Activated CD4-positive, alpha-beta memory T cell treated with anti-CD3 and anti-CD28 coated beads for 36 hours (primary cell): ENCODE measurements at regions of chr2 and their contacts with region 1.

Region 1: DNA sequence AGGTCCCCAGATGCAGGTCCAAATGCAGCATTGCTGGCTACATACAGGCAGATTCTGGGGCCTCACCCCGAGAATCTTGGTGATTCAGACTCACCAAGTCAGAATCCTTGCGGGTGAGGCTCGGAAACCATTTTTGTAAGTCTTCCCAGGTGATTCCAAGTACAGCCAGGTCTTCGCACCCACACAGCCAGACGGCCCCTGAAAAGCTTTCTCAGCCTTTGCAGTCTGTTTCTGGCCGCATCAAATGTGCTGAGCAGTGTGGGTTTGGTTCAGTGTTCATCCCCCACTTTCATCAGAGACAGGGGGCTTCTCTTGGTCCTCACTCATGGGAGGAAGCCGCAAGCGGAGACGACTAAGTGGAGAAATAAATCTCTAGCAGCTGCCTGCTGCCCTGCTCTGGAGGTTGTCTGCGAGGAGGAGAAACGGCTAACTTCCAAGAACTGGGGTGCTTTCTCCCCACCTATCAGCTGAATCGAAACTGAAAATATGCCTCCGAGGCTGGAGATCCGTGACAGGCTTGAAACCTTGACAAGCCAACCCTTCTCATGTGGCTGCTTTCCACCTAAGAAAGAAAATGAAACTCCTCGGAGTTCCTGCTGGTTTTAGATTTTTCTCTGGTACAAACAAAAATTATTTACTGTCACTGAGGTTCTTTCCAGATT is 8.9 kb upstream of the TMEM185B start:
- DNase-seq: peak; percentile 85
- H3K4me3 Mint-ChIP-seq: peak overlapping the region; percentile 82
- H3K27ac Mint-ChIP-seq: peak overlapping the region; percentile 96
- H3K4me1 Mint-ChIP-seq: peaks cover 40% of the 10 kb centered on the region
- H3K27me3 Mint-ChIP-seq: no peaks in the 10 kb centered on the region

Region 2: GRCh38 chr2:120252225-120253021 is 20.3 kb after region 1 on chr2 and contains the start of gene RALB:
- CTCF ChIA-PET with region 1: interaction called, 4 read pairs
- POLR2A ChIA-PET with region 1: interaction called, 12 read pairs
- intact Hi-C with region 1: loop called (anchors 1 kb)
- DNase-seq: peak; percentile 99
- H3K4me3 Mint-ChIP-seq: peak within 1 kb of the TSS; percentile 98
- H3K27ac Mint-ChIP-seq: peak within 1 kb of the TSS; percentile 83
- H3K4me1 Mint-ChIP-seq: peaks cover 43% of the 10 kb centered on the region
- H3K27me3 Mint-ChIP-seq: peaks cover 7% of the 10 kb centered on the region
- total RNA-seq, gene RALB: 52.5 to 52.9 TPM

Region 3: GRCh38 chr2:120261387-120262006 is 29.4 kb after region 1 on chr2:
- CTCF ChIA-PET with region 1: interaction called, 3 read pairs
- POLR2A ChIA-PET with region 1: interaction called, 16 read pairs
- intact Hi-C with region 1: loop called (anchors 1 kb)
- DNase-seq: peak; percentile 82
- H3K4me3 Mint-ChIP-seq: no peak overlapping the region
- H3K27ac Mint-ChIP-seq: no peak overlapping the region
- H3K4me1 Mint-ChIP-seq: peaks cover 28% of the 10 kb centered on the region
- H3K27me3 Mint-ChIP-seq: no peaks in the 10 kb centered on the region

Region 4: DNA sequence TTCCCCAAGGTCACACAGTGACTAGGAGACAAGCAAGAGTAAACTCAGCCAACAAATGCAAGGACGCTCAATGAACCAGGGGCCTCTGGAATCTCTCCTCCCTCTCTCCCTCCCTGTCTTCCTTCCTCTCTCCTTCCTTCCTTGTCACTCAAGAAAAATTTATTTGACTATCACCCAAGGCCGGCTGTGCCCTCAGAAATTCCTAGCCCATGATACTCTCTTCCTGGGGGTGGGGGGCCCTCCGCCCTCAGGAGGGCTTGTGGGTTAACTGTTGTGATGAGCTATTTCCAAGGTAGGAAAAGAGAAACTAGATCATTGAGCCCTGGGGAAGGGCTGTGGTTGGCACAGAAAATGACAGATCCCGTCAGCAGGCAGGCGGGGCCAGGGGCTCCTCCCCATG is 135.5 kb after region 1 on chr2:
- CTCF ChIA-PET with region 1: no interaction called
- POLR2A ChIA-PET with region 1: no interaction called
- intact Hi-C with region 1: no loop called
- DNase-seq: no peak
- H3K4me3 Mint-ChIP-seq: no peak overlapping the region
- H3K27ac Mint-ChIP-seq: no peak overlapping the region
- H3K4me1 Mint-ChIP-seq: no peaks in the 10 kb centered on the region
- H3K27me3 Mint-ChIP-seq: no peaks in the 10 kb centered on the region